ENCODE measurements at regions of chr19 and their contacts with region 1.

Region 1: DNA sequence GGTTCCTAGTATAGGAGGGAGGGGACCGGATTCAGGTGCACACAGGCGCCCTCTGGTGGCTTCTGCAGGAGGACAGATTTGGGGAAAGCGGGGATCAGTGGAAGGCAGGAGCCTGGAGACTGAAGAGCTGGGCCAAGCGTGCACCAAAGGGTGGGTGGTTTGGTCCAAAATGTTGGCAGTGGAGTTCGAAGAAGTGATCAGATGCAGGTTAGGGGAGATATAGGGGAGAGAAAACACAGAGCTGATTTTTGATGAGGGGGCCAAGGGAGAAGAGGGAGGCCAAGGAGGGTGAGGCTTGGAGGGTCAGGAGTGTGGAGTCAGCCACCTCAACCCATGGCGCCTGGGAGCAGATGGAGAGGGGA is 6.8 kb upstream of the CARM1 start:
- DNase-seq: peak; percentile 64
- H3K4me3 ChIP-seq: no peak overlapping the region
- H3K27ac ChIP-seq: no peak overlapping the region
- H3K4me1 ChIP-seq: peaks cover 2% of the 10 kb centered on the region
- H3K27me3 ChIP-seq: no peaks in the 10 kb centered on the region
- CTCF ChIP-seq: peak; percentile 93 to 98
- POLR2A ChIP-seq: no peak

Region 2: DNA sequence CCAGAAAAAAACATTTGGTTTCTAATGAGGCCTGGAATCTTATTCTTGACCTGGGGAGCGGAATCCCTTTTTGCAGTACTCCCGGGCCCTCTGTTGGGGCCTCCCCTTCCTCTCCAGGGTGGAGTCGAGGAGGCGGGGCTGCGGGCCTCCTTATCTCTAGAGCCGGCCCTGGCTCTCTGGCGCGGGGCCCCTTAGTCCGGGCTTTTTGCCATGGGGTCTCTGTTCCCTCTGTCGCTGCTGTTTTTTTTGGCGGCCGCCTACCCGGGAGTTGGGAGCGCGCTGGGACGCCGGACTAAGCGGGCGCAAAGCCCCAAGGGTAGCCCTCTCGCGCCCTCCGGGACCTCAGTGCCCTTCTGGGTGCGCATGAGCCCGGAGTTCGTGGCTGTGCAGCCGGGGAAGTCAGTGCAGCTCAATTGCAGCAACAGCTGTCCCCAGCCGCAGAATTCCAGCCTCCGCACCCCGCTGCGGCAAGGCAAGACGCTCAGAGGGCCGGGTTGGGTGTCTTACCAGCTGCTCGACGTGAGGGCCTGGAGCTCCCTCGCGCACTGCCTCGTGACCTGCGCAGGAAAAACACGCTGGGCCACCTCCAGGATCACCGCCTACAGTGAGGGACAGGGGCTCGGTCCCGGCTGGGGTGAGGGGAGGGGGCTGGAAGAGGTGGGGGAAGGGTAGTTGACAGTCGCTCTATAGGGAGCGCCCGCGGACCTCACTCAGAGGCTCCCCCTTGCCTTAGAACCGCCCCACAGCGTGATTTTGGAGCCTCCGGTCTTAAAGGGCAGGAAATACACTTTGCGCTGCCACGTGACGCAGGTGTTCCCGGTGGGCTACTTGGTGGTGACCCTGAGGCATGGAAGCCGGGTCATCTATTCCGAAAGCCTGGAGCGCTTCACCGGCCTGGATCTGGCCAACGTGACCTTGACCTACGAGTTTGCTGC is 577.4 kb before region 1 on chr19 and contains the start of gene ICAM4:
- CTCF ChIA-PET with region 1: no interaction called
- POLR2A ChIA-PET with region 1: no interaction called
- dilution Hi-C with region 1: no loop called
- intact Hi-C with region 1: no loop called
- DNase-seq: peak; percentile 49
- H3K4me3 ChIP-seq: no peak within 1 kb of the TSS
- H3K27ac ChIP-seq: no peak within 1 kb of the TSS
- H3K4me1 ChIP-seq: peaks cover 27% of the 10 kb centered on the region
- H3K27me3 ChIP-seq: peaks cover 18 to 30% of the 10 kb centered on the region in 2 experiments
- CTCF ChIP-seq: no peak
- POLR2A ChIP-seq: no peak
- total RNA-seq, gene ICAM4: 0.49 TPM in 1 of 2 replicates, not detected in the other

Region 3: DNA sequence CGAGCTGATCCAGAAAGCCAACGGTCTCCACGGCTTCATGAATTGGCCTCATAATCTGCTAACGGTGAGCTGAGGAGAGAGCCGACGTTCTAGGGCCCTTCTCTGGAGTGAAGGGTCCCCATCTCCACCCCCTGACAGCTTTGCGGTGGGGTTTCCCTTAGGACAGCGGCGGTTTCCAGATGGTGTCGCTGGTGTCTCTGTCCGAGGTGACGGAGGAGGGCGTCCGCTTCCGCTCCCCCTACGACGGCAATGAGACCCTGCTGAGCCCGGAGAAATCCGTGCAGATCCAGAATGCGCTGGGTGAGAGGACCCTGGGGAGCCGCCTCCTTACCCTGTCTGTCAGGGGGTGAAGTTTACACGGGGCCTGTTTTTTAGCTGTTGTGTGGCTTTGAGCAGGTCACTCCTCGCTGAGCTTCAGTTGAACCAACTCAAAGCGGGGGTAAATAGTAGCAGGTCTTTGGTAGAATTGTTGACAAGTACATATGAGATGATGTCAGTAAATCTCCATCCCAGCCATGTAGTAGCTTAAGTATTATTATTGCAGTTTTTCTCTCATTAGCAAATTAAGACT is 162.5 kb before region 1 on chr19:
- CTCF ChIA-PET with region 1: interaction called, 19 read pairs
- POLR2A ChIA-PET with region 1: no interaction called
- dilution Hi-C with region 1: no loop called
- intact Hi-C with region 1: no loop called
- DNase-seq: peak; percentile 13
- H3K4me3 ChIP-seq: peak overlapping the region; percentile 36 to 99 (median 68)
- H3K27ac ChIP-seq: peak overlapping the region; percentile 0
- H3K4me1 ChIP-seq: peaks cover 10% of the 10 kb centered on the region
- H3K27me3 ChIP-seq: no peaks in the 10 kb centered on the region
- CTCF ChIP-seq: no peak
- POLR2A ChIP-seq: no peak

Region 4: DNA sequence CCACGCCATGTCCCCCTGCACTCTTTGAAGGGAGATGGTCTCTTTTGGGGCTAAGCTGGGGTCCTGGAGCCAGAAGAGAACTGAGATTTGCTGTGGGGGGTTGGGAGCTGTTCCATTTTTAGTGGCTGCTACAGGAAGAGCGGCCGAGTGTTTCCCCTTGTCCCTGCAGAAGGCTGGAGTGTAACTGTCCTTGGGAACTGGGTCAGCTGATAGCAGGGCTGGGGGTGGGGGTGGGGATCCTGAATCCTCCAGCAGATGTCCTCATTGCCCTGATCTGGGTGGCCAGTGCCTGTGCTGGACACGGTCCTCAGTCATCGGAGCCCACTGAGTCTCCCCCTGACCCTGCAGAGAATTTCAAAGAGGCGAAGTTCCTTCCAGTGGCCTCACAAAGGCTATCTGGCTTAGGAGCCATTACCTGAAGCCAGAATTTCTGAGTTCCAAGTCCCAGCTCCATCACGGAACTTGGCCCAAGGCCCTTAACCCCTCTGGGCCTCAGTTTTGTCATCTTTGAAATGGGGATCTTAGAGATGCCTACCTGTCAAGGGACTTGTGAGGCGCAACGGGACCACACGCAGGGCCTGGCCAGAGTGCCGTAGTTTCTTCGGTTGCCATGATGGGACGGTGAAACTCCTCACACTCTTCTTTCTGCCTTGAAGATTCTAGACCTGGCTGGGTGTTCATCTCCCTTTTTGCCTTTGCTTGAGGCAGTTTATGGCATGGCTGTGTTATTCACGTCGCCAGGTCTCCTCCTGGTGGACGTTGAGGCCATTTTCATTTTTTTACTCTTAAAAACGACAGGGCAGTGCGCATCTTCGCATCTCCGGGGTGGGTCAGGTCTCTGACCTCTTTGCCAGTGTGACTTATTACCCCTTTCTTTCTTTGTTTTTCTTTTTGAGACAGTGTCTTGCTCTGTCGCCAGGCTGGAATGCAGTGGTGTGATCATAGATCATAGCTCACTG is 94.7 kb before region 1 on chr19:
- CTCF ChIA-PET with region 1: interaction called, 10 read pairs
- POLR2A ChIA-PET with region 1: no interaction called
- dilution Hi-C with region 1: no loop called
- intact Hi-C with region 1: loop called (anchors 1 kb)
- DNase-seq: peak; percentile 53
- H3K4me3 ChIP-seq: no peak overlapping the region
- H3K27ac ChIP-seq: no peak overlapping the region
- H3K4me1 ChIP-seq: peaks cover 3% of the 10 kb centered on the region
- H3K27me3 ChIP-seq: no peaks in the 10 kb centered on the region
- CTCF ChIP-seq: peak in 1 of 2 donors; percentile 42
- POLR2A ChIP-seq: no peak

Region 5: GRCh38 chr19:10780368-10780767 is 84.2 kb before region 1 on chr19:
- CTCF ChIA-PET with region 1: interaction called, 10 read pairs
- POLR2A ChIA-PET with region 1: no interaction called
- dilution Hi-C with region 1: no loop called
- intact Hi-C with region 1: no loop called
- DNase-seq: peak; percentile 90
- H3K4me3 ChIP-seq: no peak overlapping the region
- H3K27ac ChIP-seq: peak overlapping the region; percentile 96
- H3K4me1 ChIP-seq: peaks cover 19% of the 10 kb centered on the region
- H3K27me3 ChIP-seq: no peaks in the 10 kb centered on the region
- CTCF ChIP-seq: no peak
- POLR2A ChIP-seq: no peak

Region 6: GRCh38 chr19:10835754-10836477 is 28.6 kb before region 1 on chr19 and contains the start of gene TMED1:
- CTCF ChIA-PET with region 1: interaction called, 41 read pairs
- POLR2A ChIA-PET with region 1: no interaction called
- dilution Hi-C with region 1: no loop called
- intact Hi-C with region 1: no loop called
- DNase-seq: peak; percentile 99
- H3K4me3 ChIP-seq: peak within 1 kb of the TSS; percentile 17 to 71 (median 48)
- H3K27ac ChIP-seq: peak within 1 kb of the TSS; percentile 97
- H3K4me1 ChIP-seq: peaks cover 9% of the 10 kb centered on the region
- H3K27me3 ChIP-seq: no peaks in the 10 kb centered on the region
- CTCF ChIP-seq: peak in 1 of 2 donors; percentile 8
- POLR2A ChIP-seq: no peak
- total RNA-seq, gene TMED1: 31.2 and 33.9 TPM in 2 replicates

Region 7: GRCh38 chr19:10846500-10847202 is 17.9 kb before region 1 on chr19:
- CTCF ChIA-PET with region 1: interaction called, 56 read pairs
- POLR2A ChIA-PET with region 1: no interaction called
- dilution Hi-C with region 1: no loop called
- intact Hi-C with region 1: no loop called
- DNase-seq: no peak
- H3K4me3 ChIP-seq: no peak overlapping the region
- H3K27ac ChIP-seq: no peak overlapping the region
- H3K4me1 ChIP-seq: no peaks in the 10 kb centered on the region
- H3K27me3 ChIP-seq: peaks cover 1 to 2% of the 10 kb centered on the region in 2 experiments
- CTCF ChIP-seq: no peak
- POLR2A ChIP-seq: no peak

Region 8: GRCh38 chr19:10884274-10884673 is 19.8 kb after region 1 on chr19:
- CTCF ChIA-PET with region 1: interaction called, 13 read pairs
- POLR2A ChIA-PET with region 1: interaction called, 5 read pairs
- dilution Hi-C with region 1: no loop called
- intact Hi-C with region 1: no loop called
- DNase-seq: no peak
- H3K4me3 ChIP-seq: no peak overlapping the region
- H3K27ac ChIP-seq: no peak overlapping the region
- H3K4me1 ChIP-seq: no peaks in the 10 kb centered on the region
- H3K27me3 ChIP-seq: no peaks in the 10 kb centered on the region
- CTCF ChIP-seq: no peak
- POLR2A ChIP-seq: no peak

Measured in endothelial cell of umbilical vein (primary cell).